ENCODE measurements at regions of chr1 and their contacts with region 1.

Region 1: GRCh38 chr1:45686317-45687013 is at the start of gene GPBP1L1:
- DNase-seq: peak; percentile 98
- ATAC-seq: peak; percentile 91
- total RNA-seq, gene GPBP1L1: 72.6 TPM

Region 2: GRCh38 chr1:45584351-45585111 is 101.9 kb before region 1 on chr1:
- intact Hi-C with region 1: loop called (anchors 5 kb)
- DNase-seq: peak; percentile 92
- ATAC-seq: peak; percentile 86

Region 3: DNA sequence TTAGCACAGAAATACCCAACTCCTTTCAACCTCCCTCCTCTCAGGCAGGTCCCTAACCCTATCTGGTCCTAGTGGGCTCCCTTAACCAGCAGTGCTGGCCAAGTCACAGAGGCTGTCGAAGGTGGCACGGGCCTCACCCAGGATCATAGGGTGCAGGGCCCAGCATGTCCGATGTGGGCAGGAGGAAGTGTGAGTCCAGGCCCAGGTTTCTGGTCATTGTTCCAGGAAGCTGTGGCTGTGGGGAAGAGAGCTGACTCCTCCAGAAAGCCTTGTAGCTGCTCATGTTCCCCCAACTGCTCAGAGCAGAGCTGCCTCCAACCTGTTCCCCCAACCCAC is 65.0 kb before region 1 on chr1:
- intact Hi-C with region 1: no loop called
- DNase-seq: no peak
- ATAC-seq: peak; percentile 38

Region 4: DNA sequence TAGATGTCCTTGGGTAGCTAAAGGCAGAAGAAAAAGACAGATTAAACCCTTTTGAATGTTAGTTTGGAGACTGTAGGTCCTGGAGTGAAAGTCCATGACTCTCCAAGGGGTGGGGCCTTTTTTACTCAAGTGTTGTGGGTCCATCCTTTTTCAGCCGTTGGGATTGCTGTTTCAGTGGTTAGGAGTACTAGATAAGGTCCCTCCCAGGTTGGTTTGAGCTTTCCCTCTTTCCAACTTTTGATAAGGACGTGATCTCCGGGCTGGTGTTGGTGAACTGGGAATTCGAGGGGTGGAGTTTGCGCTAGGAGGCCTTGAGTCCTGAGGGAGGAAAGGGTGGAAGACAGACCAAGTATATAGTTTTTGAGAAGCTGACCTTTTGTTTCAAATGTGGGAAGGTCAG is 69.2 kb after region 1 on chr1:
- intact Hi-C with region 1: no loop called
- DNase-seq: no peak
- ATAC-seq: no peak

Measured in Right ventricle myocardium superior (tissue), 1 donor.